K562 (cell line): ENCODE measurements at regions of chr21 and their contacts with region 1.

Region 1: GRCh38 chr21:14403681-14404318 is 20.9 kb upstream of the HSPA13 start:
- DNase-seq: peak; percentile 31 to 68 (median 42)
- ATAC-seq: peak; percentile 91
- H3K4me3 ChIP-seq: no peak overlapping the region
- H3K27ac ChIP-seq: no peak overlapping the region
- H3K4me1 ChIP-seq: no peaks in the 10 kb centered on the region; a peak in 1 of 5 replicates
- H3K27me3 ChIP-seq: no peaks in the 10 kb centered on the region
- CTCF ChIP-seq: peak; percentile 53 to 81 (median 54)
- EP300 ChIP-seq: no peak
- POLR2A ChIP-seq: no peak
- RAD21 ChIP-seq: peak; percentile 82 to 91

Region 2: DNA sequence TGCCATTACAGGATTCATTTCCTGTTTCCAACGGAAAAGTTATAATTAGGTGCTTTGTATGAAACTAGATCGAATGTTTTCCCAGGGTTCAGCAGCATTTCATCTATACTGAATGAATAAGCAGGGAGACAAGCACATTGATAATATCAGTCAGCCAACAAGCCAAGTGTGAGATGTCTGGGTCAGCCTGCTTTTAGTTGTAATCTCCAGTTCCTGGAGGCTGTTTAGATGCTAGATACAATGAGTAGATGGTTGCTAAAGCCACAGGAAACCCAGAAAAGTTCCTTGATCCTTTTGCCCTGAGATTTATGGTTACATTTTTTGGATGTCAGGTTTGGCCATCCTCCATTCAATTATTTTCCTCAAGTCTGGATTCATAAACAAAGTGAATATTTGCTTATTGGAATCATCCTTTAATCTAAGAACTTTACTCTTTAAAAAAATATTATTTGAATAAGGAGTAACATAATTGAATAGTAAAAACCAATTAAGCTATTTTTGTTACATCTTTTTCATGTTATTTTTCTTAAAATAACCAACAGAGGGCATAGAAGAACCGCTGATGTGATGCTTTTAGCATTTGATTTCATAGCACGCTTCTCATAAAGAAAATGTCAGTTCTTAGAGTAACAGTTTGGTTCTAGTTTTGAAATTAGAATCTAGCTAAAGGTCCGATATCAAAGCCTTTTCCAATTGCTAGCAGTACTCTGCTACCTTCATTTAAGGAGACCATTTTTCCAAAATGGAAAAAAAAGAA is 97.5 kb before region 1 on chr21:
- CTCF ChIA-PET with region 1: no interaction called
- POLR2A ChIA-PET with region 1: no interaction called
- in situ Hi-C with region 1: no loop called
- intact Hi-C with region 1: loop called (anchors 5 kb)
- DNase-seq: peak in 1 of 4 experiments; percentile 26
- ATAC-seq: 0 out of 3 replicates have a peak, but pooled peaks have one; percentile 28
- H3K4me3 ChIP-seq: no peak overlapping the region
- H3K27ac ChIP-seq: no peak overlapping the region
- H3K4me1 ChIP-seq: no peaks in the 10 kb centered on the region
- H3K27me3 ChIP-seq: no peaks in the 10 kb centered on the region; a peak in 1 of 5 replicates
- CTCF ChIP-seq: peak in 2 of 3 experiments; percentile 21 to 62; a peak in 4 of 6 replicates
- EP300 ChIP-seq: no peak
- POLR2A ChIP-seq: no peak
- RAD21 ChIP-seq: peak; percentile 47 to 76; a peak in 3 of 4 replicates

Region 3: GRCh38 chr21:14773777-14774345 is 370.1 kb after region 1 on chr21:
- CTCF ChIA-PET with region 1: interaction called, 15 read pairs
- POLR2A ChIA-PET with region 1: no interaction called
- in situ Hi-C with region 1: no loop called
- intact Hi-C with region 1: loop called (anchors 5 kb)
- DNase-seq: peak; percentile 68 to 90 (median 74)
- ATAC-seq: peak; percentile 95
- H3K4me3 ChIP-seq: no peak overlapping the region
- H3K27ac ChIP-seq: no peak overlapping the region; the same call in 2 of the 3 replicates
- H3K4me1 ChIP-seq: peaks cover 0 to 18% of the 10 kb centered on the region in 2 experiments; a peak in 3 of 5 replicates
- H3K27me3 ChIP-seq: no peaks in the 10 kb centered on the region
- CTCF ChIP-seq: peak; percentile 71 to 91 (median 79)
- EP300 ChIP-seq: 0 out of 2 replicates have a peak, but pooled peaks have one; percentile 47
- POLR2A ChIP-seq: no peak
- RAD21 ChIP-seq: peak; percentile 87 to 93

Region 4: GRCh38 chr21:15293240-15293639 is 889.4 kb after region 1 on chr21:
- CTCF ChIA-PET with region 1: no interaction called
- POLR2A ChIA-PET with region 1: no interaction called
- in situ Hi-C with region 1: loop called (anchors 25 kb)
- intact Hi-C with region 1: no loop called
- DNase-seq: peak in 1 of 4 experiments; percentile 23
- ATAC-seq: no peak
- H3K4me3 ChIP-seq: no peak overlapping the region
- H3K27ac ChIP-seq: no peak overlapping the region
- H3K4me1 ChIP-seq: peaks cover 0 to 11% of the 10 kb centered on the region in 2 experiments; a peak in 2 of 5 replicates
- H3K27me3 ChIP-seq: peaks cover 0 to 5% of the 10 kb centered on the region in 2 experiments; a peak in 1 of 5 replicates
- CTCF ChIP-seq: no peak
- EP300 ChIP-seq: no peak
- POLR2A ChIP-seq: no peak
- RAD21 ChIP-seq: no peak

Region 5: GRCh38 chr21:15592271-15592860 is 1188.6 kb after region 1 on chr21:
- CTCF ChIA-PET with region 1: no interaction called
- POLR2A ChIA-PET with region 1: no interaction called
- in situ Hi-C with region 1: no loop called
- intact Hi-C with region 1: loop called (anchors 5 kb)
- DNase-seq: peak in 2 of 4 experiments; percentile 17 to 54
- ATAC-seq: no peak
- H3K4me3 ChIP-seq: no peak overlapping the region
- H3K27ac ChIP-seq: no peak overlapping the region
- H3K4me1 ChIP-seq: no peaks in the 10 kb centered on the region
- H3K27me3 ChIP-seq: no peaks in the 10 kb centered on the region
- CTCF ChIP-seq: peak; percentile 8 to 68 (median 30); a peak in 3 of 6 replicates
- EP300 ChIP-seq: no peak
- POLR2A ChIP-seq: no peak
- RAD21 ChIP-seq: peak; percentile 86 to 87